CD8-positive, alpha-beta T cell (primary cell): ENCODE measurements at regions of chr1 and their contacts with region 1.

Region 1: GRCh38 chr1:89632657-89633247 is at the start of gene LRRC8C:
- DNase-seq: peak; percentile 80 to 96 (median 86)
- ATAC-seq: peak; percentile 77
- H3K4me3 ChIP-seq: peak within 1 kb of the TSS; percentile 80 to 92
- H3K4me3 Mint-ChIP-seq: peak within 1 kb of the TSS; percentile 96
- H3K27ac ChIP-seq: peak within 1 kb of the TSS; percentile 89 to 92
- H3K27ac Mint-ChIP-seq: peak within 1 kb of the TSS; percentile 98
- H3K4me1 ChIP-seq: peaks cover 65% of the 10 kb centered on the region
- H3K4me1 Mint-ChIP-seq: peaks cover 75% of the 10 kb centered on the region
- H3K27me3 ChIP-seq: no peaks in the 10 kb centered on the region
- H3K27me3 Mint-ChIP-seq: no peaks in the 10 kb centered on the region
- CTCF ChIP-seq: peak; percentile 53
- total RNA-seq, gene LRRC8C: 24.0 to 26.7 TPM

Region 2: DNA sequence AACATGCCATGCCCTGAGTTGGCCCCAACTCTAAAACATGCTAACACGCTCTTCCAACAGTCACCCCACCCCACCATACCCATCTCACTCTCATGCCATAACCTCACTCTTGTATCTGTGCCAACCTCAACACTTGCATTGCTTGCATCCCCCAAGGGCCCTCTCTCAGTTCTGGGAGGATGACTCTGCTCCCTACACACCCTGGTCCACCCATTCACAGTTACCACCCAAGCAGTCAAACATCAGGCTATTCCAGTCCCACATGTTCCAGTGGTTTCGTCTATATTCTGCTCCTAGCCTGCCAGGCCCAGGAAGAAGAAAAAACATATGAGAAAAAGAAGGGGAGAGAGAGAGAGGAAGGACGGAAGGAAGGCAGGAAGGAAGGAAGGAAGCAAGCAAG is 237.9 kb before region 1 on chr1:
- CTCF ChIA-PET with region 1: no interaction called
- POLR2A ChIA-PET with region 1: no interaction called
- intact Hi-C with region 1: no loop called
- DNase-seq: no peak
- ATAC-seq: no peak
- H3K4me3 ChIP-seq: no peak overlapping the region
- H3K4me3 Mint-ChIP-seq: no peak overlapping the region
- H3K27ac ChIP-seq: no peak overlapping the region
- H3K27ac Mint-ChIP-seq: no peak overlapping the region
- H3K4me1 ChIP-seq: no peaks in the 10 kb centered on the region
- H3K4me1 Mint-ChIP-seq: no peaks in the 10 kb centered on the region
- H3K27me3 ChIP-seq: no peaks in the 10 kb centered on the region
- H3K27me3 Mint-ChIP-seq: no peaks in the 10 kb centered on the region
- CTCF ChIP-seq: no peak

Region 3: DNA sequence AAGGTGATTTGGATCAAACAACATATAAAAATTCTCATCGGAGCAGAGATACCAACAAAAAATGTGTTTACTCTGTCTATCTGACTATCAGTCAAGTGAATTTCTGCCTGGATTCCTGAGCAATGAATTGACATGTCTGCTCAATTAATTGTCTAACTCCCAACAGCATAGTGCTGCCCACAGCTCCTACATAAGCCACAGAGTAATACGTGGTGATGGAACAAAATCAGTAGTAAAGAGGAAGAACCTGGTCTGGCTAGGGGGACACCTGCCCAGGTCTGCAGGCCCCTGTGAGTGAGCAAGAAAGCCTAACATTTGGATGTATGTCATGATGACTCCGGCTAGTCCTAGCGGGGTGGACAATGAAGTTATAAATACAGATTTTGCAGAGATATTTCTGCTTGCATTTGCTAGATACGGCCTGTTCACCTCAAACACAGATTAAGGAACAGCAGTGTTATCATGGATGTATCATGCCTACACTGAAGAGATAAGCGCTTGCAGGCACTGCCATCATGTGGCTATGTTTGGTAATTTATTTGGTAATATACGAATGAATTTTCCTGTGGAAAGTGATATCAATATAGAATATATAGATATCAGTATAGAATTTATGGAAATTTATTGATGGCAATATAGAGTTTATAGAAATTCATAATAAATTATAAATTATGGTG is 177.8 kb before region 1 on chr1:
- CTCF ChIA-PET with region 1: no interaction called
- POLR2A ChIA-PET with region 1: no interaction called
- intact Hi-C with region 1: no loop called
- DNase-seq: peak; percentile 15 to 77 (median 60)
- ATAC-seq: peak; percentile 94
- H3K4me3 ChIP-seq: no peak overlapping the region
- H3K4me3 Mint-ChIP-seq: no peak overlapping the region
- H3K27ac ChIP-seq: no peak overlapping the region
- H3K27ac Mint-ChIP-seq: no peak overlapping the region
- H3K4me1 ChIP-seq: no peaks in the 10 kb centered on the region
- H3K4me1 Mint-ChIP-seq: peaks cover 7% of the 10 kb centered on the region
- H3K27me3 ChIP-seq: no peaks in the 10 kb centered on the region
- H3K27me3 Mint-ChIP-seq: peaks cover 7% of the 10 kb centered on the region
- CTCF ChIP-seq: peak; percentile 96

Region 4: DNA sequence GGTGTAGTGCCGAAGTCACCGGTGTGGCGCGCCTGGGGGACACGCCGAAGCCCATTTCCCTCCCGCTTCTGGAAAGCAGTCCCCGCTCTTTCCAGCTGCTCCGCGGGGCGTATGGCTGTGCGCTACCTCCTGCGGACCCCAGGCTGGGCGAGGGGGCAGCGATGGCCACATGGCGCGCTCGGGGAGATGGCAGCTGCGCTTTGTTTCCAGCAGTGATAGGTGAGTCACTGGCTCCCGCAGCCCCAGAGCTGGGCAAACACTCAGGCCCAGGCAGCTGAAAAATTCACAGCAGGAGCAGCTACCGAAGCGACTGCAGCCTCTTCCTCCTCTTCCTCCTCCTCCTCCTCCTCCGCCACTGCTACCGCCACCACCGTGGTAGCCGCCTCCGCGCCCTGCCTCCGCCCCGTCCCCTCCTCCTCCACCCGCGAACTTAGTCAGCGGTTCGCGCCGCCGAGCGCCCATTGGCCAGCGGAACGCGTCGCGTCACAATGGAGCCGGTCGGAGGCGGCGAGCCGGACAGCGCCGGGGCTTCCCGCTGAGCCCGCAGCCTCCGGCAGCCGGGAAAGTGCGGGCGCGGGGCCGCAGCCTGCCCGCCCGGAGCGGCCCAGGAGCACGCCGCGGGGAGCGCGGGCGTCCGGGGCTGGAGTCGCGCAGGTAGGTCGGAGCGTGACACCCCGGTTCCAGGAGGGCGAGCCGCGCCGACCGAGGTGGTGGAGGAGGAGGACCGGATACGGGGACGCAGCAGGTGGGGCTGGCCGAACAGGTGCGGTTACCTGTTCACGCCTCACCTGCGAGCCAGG is 108.2 kb before region 1 on chr1 and contains the start of gene LRRC8B:
- CTCF ChIA-PET with region 1: interaction called, 22 read pairs
- POLR2A ChIA-PET with region 1: interaction called, 4 read pairs
- intact Hi-C with region 1: loop called in 1 of 2 experiments (anchors 1 kb)
- DNase-seq: peak; percentile 73 to 94 (median 86)
- ATAC-seq: peak; percentile 80
- H3K4me3 ChIP-seq: peak within 1 kb of the TSS; percentile 92 to 98
- H3K4me3 Mint-ChIP-seq: no peak within 1 kb of the TSS
- H3K27ac ChIP-seq: peak within 1 kb of the TSS; percentile 81 to 91
- H3K27ac Mint-ChIP-seq: peak within 1 kb of the TSS; percentile 90
- H3K4me1 ChIP-seq: peaks cover 38% of the 10 kb centered on the region
- H3K4me1 Mint-ChIP-seq: peaks cover 25% of the 10 kb centered on the region
- H3K27me3 ChIP-seq: no peaks in the 10 kb centered on the region
- H3K27me3 Mint-ChIP-seq: no peaks in the 10 kb centered on the region
- CTCF ChIP-seq: no peak
- total RNA-seq, gene LRRC8B: 11.8 to 14.5 TPM

Region 5: GRCh38 chr1:89547563-89548485 is 84.9 kb before region 1 on chr1:
- CTCF ChIA-PET with region 1: no interaction called
- POLR2A ChIA-PET with region 1: no interaction called
- intact Hi-C with region 1: no loop called
- DNase-seq: no peak
- ATAC-seq: no peak
- H3K4me3 ChIP-seq: no peak overlapping the region
- H3K4me3 Mint-ChIP-seq: no peak overlapping the region
- H3K27ac ChIP-seq: no peak overlapping the region
- H3K27ac Mint-ChIP-seq: no peak overlapping the region
- H3K4me1 ChIP-seq: peaks cover 6% of the 10 kb centered on the region
- H3K4me1 Mint-ChIP-seq: peaks cover 67% of the 10 kb centered on the region
- H3K27me3 ChIP-seq: no peaks in the 10 kb centered on the region
- H3K27me3 Mint-ChIP-seq: no peaks in the 10 kb centered on the region
- CTCF ChIP-seq: no peak

Region 6: GRCh38 chr1:89615676-89616598 is 16.8 kb before region 1 on chr1:
- CTCF ChIA-PET with region 1: interaction called, 401 read pairs
- POLR2A ChIA-PET with region 1: interaction called, 285 read pairs
- intact Hi-C with region 1: loop called in 1 of 2 experiments (anchors 1 kb)
- DNase-seq: peak in 3 of 9 experiments; percentile 27 to 59 (median 49)
- ATAC-seq: no peak
- H3K4me3 ChIP-seq: no peak overlapping the region
- H3K4me3 Mint-ChIP-seq: no peak overlapping the region
- H3K27ac ChIP-seq: no peak overlapping the region
- H3K27ac Mint-ChIP-seq: no peak overlapping the region
- H3K4me1 ChIP-seq: peaks cover 43% of the 10 kb centered on the region
- H3K4me1 Mint-ChIP-seq: peaks cover 73% of the 10 kb centered on the region
- H3K27me3 ChIP-seq: no peaks in the 10 kb centered on the region
- H3K27me3 Mint-ChIP-seq: no peaks in the 10 kb centered on the region
- CTCF ChIP-seq: no peak

Region 7: GRCh38 chr1:89671775-89672488 is 39.2 kb after region 1 on chr1:
- CTCF ChIA-PET with region 1: interaction called, 5 read pairs
- POLR2A ChIA-PET with region 1: interaction called, 7 read pairs
- intact Hi-C with region 1: loop called (anchors 5 kb)
- DNase-seq: no peak
- ATAC-seq: no peak
- H3K4me3 ChIP-seq: no peak overlapping the region
- H3K4me3 Mint-ChIP-seq: no peak overlapping the region
- H3K27ac ChIP-seq: no peak overlapping the region
- H3K27ac Mint-ChIP-seq: peak overlapping the region; percentile 23
- H3K4me1 ChIP-seq: peaks cover 83% of the 10 kb centered on the region
- H3K4me1 Mint-ChIP-seq: peaks cover 90% of the 10 kb centered on the region
- H3K27me3 ChIP-seq: no peaks in the 10 kb centered on the region
- H3K27me3 Mint-ChIP-seq: no peaks in the 10 kb centered on the region
- CTCF ChIP-seq: no peak

Region 8: DNA sequence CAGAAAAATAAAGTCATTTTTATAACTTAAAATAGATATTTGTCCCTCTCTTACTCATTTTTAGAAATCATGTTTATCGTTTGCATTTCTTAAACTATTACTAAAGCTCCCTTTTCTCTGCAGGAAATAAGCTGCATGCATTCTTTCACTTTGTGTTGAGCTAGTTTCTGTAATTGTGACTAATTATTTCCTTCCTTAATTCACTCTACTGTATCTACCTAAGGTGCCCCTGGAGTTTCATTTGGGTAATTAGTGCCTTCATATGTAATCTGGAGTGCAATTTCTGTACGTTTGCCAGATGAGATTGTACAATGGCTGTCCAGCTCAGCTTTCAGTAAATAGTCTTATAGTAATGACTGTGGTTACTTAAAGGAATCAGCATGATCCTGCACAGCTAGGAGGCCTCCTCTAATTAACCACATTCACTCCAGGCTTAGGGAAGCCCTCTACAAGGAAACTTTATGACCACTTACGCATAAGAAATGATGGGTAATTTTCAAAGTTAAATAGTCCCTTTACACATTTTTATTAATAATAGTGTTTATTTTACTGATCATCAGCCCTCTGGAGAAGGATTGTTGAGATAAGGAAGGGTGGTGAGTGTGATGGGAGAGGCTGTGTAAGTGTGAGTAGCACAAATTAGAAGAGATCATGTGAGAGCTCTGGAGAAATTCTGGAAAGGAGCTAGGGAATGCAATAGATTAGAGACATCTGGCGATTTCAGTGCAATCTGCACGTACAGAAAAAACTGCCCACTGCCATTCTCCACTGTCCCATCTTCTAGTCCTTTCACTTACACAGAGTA is 87.0 kb after region 1 on chr1:
- CTCF ChIA-PET with region 1: interaction called, 14 read pairs
- POLR2A ChIA-PET with region 1: interaction called, 7 read pairs
- intact Hi-C with region 1: loop called in 1 of 2 experiments (anchors 1 kb)
- DNase-seq: peak in 2 of 9 experiments; percentile 42 to 67
- ATAC-seq: peak; percentile 68
- H3K4me3 ChIP-seq: no peak overlapping the region
- H3K4me3 Mint-ChIP-seq: peak overlapping the region; percentile 22
- H3K27ac ChIP-seq: peak overlapping the region in 1 of 2 experiments; percentile 65
- H3K27ac Mint-ChIP-seq: peak overlapping the region; percentile 91
- H3K4me1 ChIP-seq: peaks cover 63% of the 10 kb centered on the region
- H3K4me1 Mint-ChIP-seq: peaks cover 80% of the 10 kb centered on the region
- H3K27me3 ChIP-seq: no peaks in the 10 kb centered on the region
- H3K27me3 Mint-ChIP-seq: no peaks in the 10 kb centered on the region
- CTCF ChIP-seq: no peak

Region 9: DNA sequence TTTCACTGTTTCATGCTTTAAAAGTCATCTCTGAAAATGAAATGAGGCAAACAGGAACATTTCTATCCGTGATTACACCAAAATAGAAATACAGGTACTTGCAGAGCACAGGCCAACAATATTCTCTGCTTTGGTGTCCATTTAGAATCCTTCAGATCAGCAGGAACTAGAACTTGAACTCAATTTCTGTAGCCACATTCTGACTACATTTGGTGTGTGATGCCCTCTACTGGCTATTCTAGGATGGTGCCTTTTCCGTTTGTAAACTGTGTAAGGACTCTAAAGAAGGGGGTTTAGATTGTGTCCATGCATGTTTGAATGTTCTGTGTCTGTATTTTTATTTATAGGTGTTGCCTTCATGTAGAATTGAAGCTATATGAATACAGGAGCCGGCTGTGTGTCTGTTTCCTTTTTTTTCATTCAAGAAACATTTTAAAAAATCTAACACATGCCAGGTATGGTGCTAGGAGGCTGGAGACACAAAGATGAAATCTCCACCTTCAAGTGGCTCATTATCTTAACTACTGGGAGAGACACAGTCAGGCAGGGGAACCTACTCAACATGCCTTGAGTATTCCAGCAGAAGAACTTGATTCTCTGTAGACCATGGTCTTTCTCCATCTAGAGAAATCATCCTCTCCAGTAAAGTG is 354.5 kb after region 1 on chr1:
- CTCF ChIA-PET with region 1: no interaction called
- POLR2A ChIA-PET with region 1: no interaction called
- intact Hi-C with region 1: loop called in 1 of 2 experiments (anchors 5 kb)
- DNase-seq: peak in 8 of 9 experiments; percentile 16 to 81 (median 52)
- ATAC-seq: peak; percentile 95
- H3K4me3 ChIP-seq: no peak overlapping the region
- H3K4me3 Mint-ChIP-seq: no peak overlapping the region
- H3K27ac ChIP-seq: no peak overlapping the region
- H3K27ac Mint-ChIP-seq: no peak overlapping the region
- H3K4me1 ChIP-seq: no peaks in the 10 kb centered on the region
- H3K4me1 Mint-ChIP-seq: no peaks in the 10 kb centered on the region
- H3K27me3 ChIP-seq: no peaks in the 10 kb centered on the region
- H3K27me3 Mint-ChIP-seq: no peaks in the 10 kb centered on the region
- CTCF ChIP-seq: peak; percentile 84